Dendritic cell treated with granulocyte-macrophage colony-stimulating factor and Interleukin-4, amounts not matched to agents 40 ng/mL and 50 ng/mL, for 4 days (primary cell): ENCODE measurements at regions of chr11 and their contacts with region 1.

Region 1: DNA sequence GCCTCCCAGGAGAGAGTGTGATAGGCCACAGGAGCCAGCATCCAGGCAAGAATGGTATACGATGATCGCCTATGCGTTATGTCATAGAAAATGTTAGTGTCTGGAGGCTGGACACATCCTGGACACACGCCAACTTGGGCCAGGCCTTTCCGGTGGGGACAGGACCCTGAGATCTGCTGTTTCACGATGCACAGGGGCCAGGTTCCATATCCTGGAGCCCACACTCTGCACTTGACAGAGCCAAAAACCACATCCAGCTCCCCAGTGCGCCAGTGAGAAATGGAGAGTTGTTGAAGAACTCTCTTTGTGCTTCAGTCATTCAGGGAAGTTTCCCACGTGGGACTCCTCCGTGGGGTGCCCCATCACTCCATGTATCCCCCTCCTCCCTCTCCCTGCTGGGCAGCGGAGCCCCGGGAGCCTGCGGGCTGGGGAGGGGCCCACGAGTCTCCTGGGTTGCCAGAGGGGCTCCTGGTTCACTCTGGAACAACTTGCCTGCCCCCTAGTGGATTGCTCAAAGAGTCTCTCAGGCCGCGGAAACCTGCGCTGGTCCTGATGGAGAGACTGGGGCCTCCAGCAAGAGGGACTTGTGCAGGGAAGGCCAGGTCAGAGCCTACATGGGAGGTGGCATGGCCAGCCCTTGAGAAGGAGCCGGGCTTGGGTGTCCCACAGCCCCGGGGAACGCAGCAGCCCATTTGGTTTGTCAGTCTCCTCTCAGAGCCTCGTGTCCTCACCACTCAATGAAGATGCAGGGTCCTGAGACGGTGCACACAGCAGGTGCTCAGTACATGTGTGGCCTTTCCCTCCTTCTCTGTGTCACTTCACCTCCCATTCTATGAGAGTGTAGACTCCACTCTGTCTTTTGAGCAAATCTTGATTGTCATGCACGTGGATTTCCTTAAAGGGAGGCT is 10.2 kb upstream of the LRRC32 start:
- H3K4me3 Mint-ChIP-seq: no peak overlapping the region
- H3K27ac Mint-ChIP-seq: no peak overlapping the region
- H3K4me1 Mint-ChIP-seq: peaks cover 73% of the 10 kb centered on the region
- H3K27me3 Mint-ChIP-seq: peaks cover 57% of the 10 kb centered on the region

Region 2: GRCh38 chr11:75896843-75897419 is 783.8 kb before region 1 on chr11:
- intact Hi-C with region 1: no loop called
- H3K4me3 Mint-ChIP-seq: no peak overlapping the region
- H3K27ac Mint-ChIP-seq: no peak overlapping the region
- H3K4me1 Mint-ChIP-seq: peaks cover 65% of the 10 kb centered on the region
- H3K27me3 Mint-ChIP-seq: no peaks in the 10 kb centered on the region

Region 3: DNA sequence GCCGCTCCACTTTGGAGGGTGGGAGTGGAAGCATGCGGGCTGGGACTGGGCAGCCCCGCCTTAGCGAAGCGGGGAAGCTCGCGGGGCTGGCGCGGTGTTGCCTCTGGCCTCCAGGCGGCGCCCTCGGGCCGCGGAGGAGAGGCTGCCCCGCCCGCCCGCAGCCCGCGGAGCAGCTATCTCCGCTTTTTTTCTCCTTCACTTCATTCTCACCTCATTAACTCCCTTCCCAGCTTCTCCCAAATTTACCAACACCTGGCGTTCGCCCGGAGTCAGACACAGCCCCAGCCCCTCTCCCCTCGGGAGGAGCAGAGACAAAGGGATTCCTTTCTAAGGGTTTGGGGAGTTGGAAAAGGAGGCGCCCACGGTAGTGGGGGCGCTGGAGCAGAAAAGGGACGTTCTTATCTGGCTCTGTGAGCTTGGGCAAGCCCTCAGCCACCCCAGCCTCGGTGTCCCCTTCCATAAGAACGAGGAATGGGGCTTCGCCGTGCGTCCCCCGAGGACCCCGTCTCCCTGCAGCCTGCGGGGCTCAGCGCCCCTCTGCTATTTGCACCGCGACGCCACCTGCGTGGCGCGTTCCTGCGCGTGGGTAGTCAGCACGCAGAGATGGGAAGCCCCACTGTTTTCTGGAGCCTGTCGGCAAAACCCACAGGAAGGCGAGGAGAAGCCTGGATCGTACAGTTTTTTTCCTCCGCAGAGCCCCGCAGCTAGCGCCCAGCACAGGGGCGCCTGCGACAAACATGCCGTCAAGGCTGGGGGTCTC is 472.9 kb before region 1 on chr11:
- intact Hi-C with region 1: loop called (anchors 5 kb)
- H3K4me3 Mint-ChIP-seq: peak overlapping the region; percentile 82
- H3K27ac Mint-ChIP-seq: peak overlapping the region; percentile 31
- H3K4me1 Mint-ChIP-seq: peaks cover 52% of the 10 kb centered on the region
- H3K27me3 Mint-ChIP-seq: peaks cover 91% of the 10 kb centered on the region

Region 4: GRCh38 chr11:76551400-76551799 is 129.4 kb before region 1 on chr11:
- intact Hi-C with region 1: loop called (anchors 5 kb)
- H3K4me3 Mint-ChIP-seq: no peak overlapping the region
- H3K27ac Mint-ChIP-seq: no peak overlapping the region
- H3K4me1 Mint-ChIP-seq: no peaks in the 10 kb centered on the region
- H3K27me3 Mint-ChIP-seq: no peaks in the 10 kb centered on the region

Region 5: DNA sequence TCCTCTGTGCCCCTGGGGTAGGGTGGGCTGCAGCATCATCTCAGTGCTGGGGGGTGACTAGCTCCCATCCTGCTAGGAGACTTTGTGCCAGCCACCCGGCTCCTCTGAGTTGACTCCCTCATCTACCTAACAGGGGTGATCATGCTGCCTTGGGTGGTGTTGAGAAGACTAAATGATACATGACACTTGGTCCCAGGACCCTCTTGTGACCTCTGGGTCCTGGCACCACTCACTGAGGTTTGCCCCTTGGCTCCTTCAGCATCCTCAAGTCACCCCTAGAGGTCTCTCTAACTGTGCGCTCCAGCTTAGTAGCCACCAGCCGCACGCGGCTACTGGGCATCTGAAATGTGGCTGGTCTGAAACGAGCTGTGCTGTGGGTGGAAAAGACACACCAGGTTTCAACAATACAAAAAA is 82.3 kb before region 1 on chr11:
- intact Hi-C with region 1: loop called (anchors 1 kb)
- H3K4me3 Mint-ChIP-seq: no peak overlapping the region
- H3K27ac Mint-ChIP-seq: no peak overlapping the region
- H3K4me1 Mint-ChIP-seq: peaks cover 4% of the 10 kb centered on the region
- H3K27me3 Mint-ChIP-seq: peaks cover 40% of the 10 kb centered on the region

Region 6: DNA sequence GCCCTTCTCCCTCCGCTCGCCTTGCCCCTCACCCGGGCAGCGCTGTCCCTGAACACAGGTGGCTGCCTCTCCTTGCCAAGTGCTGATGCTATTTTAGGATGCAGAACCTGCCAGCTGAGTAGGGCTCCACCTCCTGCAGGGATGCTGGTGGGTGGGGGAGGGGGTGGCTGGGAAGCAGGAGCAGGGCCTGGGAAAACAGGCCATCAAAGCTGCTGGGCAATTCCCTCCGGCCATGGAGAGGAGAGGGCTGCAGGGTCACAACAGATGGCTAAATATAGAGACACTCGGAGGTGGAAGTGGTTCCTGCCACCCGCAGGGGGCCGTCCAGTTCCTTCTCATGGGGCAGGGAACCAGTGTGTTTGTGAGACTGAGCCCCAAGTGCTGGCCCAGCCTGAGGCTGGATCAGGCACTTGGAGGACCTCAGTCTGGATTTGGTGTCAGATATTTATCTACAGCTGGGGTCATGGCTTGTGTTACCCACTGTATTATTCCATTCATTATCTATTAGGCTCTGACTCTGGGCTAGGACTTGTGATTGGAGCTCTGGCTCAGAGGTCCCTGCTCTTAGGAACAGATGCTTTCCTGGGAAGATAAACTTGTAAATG is 69.8 kb before region 1 on chr11:
- intact Hi-C with region 1: loop called (anchors 2 kb)
- H3K4me3 Mint-ChIP-seq: no peak overlapping the region
- H3K27ac Mint-ChIP-seq: no peak overlapping the region
- H3K4me1 Mint-ChIP-seq: peaks cover 23% of the 10 kb centered on the region
- H3K27me3 Mint-ChIP-seq: peaks cover 36% of the 10 kb centered on the region

Region 7: GRCh38 chr11:76721755-76722677 is 41.2 kb after region 1 on chr11:
- intact Hi-C with region 1: no loop called
- H3K4me3 Mint-ChIP-seq: no peak overlapping the region
- H3K27ac Mint-ChIP-seq: peak overlapping the region; percentile 50
- H3K4me1 Mint-ChIP-seq: peaks cover 12% of the 10 kb centered on the region
- H3K27me3 Mint-ChIP-seq: peaks cover 53% of the 10 kb centered on the region